ENCODE measurements at regions of chr1 and their contacts with region 1.

Region 1: DNA sequence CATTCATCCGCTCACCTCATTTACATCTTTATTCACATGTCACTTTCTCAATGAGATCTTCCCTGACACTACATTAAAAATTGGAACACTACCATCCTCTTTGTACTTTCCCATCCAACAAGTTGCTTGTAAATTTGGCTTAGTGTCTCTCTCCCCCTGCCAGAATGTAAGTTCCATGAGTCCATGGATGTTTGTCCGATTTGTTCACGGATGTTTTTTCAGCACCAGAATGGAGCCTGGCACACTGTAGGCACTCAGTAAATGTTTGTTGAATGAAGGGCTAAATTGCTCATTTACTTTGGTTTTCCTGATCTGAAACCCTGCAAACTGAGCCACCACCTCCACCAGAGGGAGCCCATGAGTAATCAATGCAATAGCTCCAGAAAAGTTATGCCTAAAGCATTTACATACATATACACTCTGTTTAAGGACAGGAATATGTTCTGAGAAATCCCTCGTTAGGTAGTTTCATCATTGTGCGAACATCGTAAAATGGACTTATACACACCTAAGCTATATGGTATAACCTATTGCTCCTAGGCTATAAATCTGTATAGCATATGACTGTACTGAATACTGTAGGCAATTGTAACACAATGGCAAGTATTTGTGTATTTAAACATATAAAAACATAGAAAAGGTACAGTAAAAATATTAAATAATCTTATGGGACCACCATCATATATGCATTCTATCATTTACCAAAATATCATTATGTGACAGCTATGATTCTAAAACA is 2.8 kb upstream of the EYA3 start:
- DNase-seq: peak in 3 of 4 donors; percentile 41 to 72 (median 60)
- ATAC-seq: peak; percentile 27
- H3K4me3 ChIP-seq: no peak overlapping the region
- H3K27ac ChIP-seq: peak overlapping the region in 1 of 2 donors; percentile 45
- H3K4me1 ChIP-seq: peaks cover 13 to 38% of the 10 kb centered on the region in 2 donors
- H3K27me3 ChIP-seq: no peaks in the 10 kb centered on the region
- CTCF ChIP-seq: peak; percentile 84 to 91

Region 2: DNA sequence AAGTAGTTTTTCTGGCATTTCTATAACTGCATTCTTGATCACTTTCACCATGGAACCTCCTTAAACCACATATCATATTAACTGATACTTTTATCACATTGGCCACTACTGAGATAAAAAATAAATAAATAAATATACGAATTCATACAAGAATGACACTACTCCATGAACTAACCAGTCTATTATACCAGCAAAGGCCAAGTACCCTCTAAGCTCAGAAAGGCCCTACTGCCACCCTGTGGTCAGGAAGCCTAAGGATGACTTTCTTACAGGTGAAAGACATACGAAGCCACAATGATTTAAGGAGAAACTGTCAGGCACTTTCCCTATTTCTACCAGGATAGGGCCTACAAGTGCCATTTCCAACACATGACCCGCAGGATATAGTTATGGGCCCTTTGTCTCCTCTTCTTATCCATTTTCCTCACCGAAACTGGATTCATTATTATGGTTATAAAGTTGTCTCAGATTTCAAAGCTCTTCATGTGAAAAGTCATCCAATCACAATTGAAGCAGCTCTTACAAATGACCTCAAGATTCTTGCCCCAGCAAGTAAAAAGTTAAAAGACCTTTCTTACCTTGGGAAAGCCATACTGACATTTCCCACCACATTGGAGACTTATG is 117.7 kb after region 1 on chr1:
- intact Hi-C with region 1: loop called in 1 of 2 experiments (anchors 5 kb)
- DNase-seq: peak in 3 of 4 donors; percentile 17 to 56 (median 52)
- ATAC-seq: peak; percentile 98
- H3K4me3 ChIP-seq: no peak overlapping the region
- H3K27ac ChIP-seq: no peak overlapping the region
- H3K4me1 ChIP-seq: peaks cover 0 to 11% of the 10 kb centered on the region in 2 donors
- H3K27me3 ChIP-seq: no peaks in the 10 kb centered on the region
- CTCF ChIP-seq: peak; percentile 74 to 75